HEK293 (cell line): ENCODE measurements at regions of chr19 and their contacts with region 1.

Region 1: DNA sequence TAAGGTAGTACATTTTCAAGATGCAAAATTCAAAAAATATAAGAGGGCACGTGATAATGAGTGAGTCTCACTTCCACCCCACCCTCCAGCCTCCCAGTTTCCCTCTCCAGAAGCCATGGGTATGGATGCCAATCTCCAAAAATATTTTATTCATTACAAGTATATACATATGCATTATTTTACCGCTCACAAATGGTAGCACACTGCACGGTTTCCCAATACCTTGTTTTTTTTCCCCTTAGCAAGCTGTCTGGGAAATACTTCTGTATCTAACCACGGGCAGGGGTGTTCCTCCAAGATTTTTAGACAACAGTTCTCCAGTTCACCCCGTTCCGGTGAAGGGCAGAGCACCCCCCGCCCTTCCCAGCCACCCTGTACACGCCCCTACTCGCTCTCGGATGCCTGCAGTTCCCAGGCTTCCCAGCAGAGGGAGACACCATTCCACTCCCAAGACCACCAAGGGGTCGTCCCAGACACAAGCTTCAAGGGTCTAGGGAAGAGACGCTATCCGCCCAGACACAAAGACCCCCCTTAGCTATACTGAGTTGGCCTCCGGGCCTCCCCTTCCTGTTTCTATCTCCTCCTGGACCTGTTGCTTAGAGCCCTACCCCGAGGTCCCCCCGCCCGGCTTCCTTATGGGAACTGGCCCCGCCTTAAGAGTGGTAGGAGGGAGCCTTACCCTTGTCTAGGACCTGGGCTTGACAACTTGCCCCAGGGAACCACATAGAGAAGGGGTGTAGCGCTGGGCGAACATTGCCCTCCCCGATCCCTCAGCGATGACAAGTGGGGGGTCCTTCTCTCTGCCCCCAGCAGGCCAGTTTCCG is 1.1 kb upstream of the FXYD3 start:
- H3K4me3 ChIP-seq: peak overlapping the region; percentile 7
- H3K27ac ChIP-seq: no peak overlapping the region
- H3K4me1 ChIP-seq: peaks cover 2% of the 10 kb centered on the region; the same call in 1 of the 2 replicates
- CTCF ChIP-seq: peak; percentile 98

Region 2: DNA sequence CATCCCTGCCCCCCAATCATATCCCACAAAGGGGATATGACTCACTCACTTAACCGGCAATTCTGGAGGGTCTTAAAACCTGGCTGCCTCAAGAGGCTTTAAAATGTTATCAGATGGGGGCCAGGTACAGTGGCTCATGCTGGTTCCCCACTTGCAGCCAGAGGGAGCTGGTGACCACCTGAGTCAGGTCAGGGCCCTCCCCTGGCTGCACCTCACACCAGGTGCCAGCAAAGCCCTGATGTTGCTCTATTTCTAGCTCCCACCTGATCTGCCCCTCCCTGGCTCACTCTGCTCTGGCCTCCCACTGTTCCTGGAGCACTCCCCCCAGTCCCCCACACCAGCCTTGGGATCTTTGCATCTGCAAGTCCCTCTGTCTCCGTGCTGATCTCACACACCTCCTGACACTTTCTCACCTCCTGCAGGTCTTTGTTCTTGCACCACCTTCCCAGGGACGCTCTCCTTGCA is 58.8 kb before region 1 on chr19:
- CTCF ChIA-PET with region 1: interaction called, 19 read pairs
- POLR2A ChIA-PET with region 1: interaction called, 4 read pairs
- H3K4me3 ChIP-seq: no peak overlapping the region
- H3K27ac ChIP-seq: no peak overlapping the region
- H3K4me1 ChIP-seq: peaks cover 7% of the 10 kb centered on the region; the same call in 1 of the 2 replicates
- CTCF ChIP-seq: peak; percentile 89

Region 3: DNA sequence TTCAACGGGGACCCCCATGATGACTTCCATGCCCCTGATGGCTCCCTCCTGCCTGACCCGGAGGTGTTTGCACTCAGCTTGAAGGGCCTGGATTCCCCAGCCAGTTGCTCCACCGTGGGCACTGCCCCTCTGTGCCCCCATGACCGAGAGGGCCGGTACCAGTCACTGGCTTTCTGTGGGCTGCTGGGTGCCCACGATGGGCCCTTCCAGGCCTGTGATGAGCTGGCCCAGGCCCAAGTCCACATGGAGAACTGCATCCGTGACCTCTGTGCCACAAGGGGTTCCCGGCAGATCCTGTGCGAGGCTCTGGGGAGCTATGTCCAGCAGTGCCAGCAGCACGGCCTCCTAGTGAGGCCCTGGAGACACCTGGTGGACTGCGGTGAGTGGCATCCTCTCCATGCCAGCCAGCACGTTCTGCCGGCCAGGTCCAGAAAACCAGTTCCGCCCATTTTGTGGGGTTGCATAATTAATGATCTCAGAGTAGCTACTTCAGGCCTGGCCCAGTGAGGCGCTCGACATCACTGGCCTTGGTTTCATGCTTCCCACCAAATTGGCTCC is 33.9 kb before region 1 on chr19:
- CTCF ChIA-PET with region 1: interaction called, 14 read pairs
- POLR2A ChIA-PET with region 1: no interaction called
- H3K4me3 ChIP-seq: no peak overlapping the region
- H3K27ac ChIP-seq: no peak overlapping the region
- H3K4me1 ChIP-seq: no peaks in the 10 kb centered on the region
- CTCF ChIP-seq: peak; percentile 23; the same call in 1 of the 2 replicates

Region 4: DNA sequence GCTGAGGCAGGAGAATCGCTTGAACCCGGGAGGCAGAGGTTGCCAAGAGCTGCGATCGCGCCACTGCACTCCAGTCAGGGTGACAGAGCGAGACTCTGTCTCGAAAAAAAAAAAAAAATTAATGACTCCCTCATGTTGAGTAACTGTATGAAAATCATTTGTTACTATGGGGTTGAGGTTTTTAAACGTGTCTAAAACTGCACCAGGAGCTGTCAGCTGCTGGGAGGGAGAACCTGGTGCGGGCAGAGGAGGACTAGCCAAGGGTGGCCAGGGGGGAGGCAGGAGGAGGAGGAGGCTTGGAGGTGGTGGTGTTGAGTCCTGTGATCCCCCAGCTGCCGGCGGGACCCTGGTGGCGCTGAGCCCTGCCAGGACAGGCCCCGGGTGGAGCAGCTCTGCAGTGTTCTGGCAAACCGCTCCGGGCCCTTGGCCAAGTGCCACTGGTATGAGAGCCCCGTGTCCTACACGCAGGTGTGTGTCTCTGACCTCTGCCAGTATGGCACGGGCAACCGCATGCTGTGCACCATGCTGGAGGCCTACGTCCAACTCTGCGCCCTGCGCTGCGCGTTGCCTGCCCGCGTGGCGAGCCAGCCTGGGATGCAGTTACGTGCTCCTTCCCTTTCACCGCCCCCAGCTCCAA is 16.0 kb before region 1 on chr19:
- CTCF ChIA-PET with region 1: interaction called, 25 read pairs
- POLR2A ChIA-PET with region 1: interaction called, 3 read pairs
- H3K4me3 ChIP-seq: no peak overlapping the region
- H3K27ac ChIP-seq: no peak overlapping the region
- H3K4me1 ChIP-seq: no peaks in the 10 kb centered on the region
- CTCF ChIP-seq: no peak